PC-3 (cell line): ENCODE measurements at regions of chr2 and their contacts with region 1.

Region 1: DNA sequence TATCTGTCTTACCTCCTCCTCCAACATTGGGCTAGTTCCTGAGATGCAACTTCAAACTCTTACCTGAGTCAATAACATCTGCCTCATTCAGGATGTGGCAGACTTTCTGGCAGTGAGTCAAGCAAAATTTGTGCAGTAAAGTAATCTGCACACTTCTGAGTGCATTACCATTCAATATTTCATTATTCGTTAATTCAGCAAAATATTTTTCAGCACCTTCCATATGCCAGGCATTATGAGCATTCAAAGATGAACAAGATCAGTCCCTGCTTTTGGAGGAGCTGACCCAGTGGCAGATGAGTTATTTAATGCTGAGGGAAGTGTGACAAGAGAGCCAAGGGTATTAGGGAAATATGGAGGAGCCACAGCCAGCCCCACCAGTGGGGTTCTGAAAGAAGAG is 339.7 kb downstream of the LNPK start:
- DNase-seq: no peak
- ATAC-seq: no peak
- H3K4me3 ChIP-seq: no peak overlapping the region
- H3K27ac ChIP-seq: no peak overlapping the region
- H3K4me1 ChIP-seq: no peaks in the 10 kb centered on the region
- H3K27me3 ChIP-seq: peaks cover 58% of the 10 kb centered on the region
- CTCF ChIP-seq: no peak

Region 2: GRCh38 chr2:177106212-177106611 is 1443.9 kb after region 1 on chr2:
- CTCF ChIA-PET with region 1: interaction called, 13 read pairs
- POLR2A ChIA-PET with region 1: no interaction called
- intact Hi-C with region 1: no loop called
- DNase-seq: peak; percentile 31
- ATAC-seq: peak; percentile 73
- H3K4me3 ChIP-seq: no peak overlapping the region
- H3K27ac ChIP-seq: no peak overlapping the region
- H3K4me1 ChIP-seq: no peaks in the 10 kb centered on the region
- H3K27me3 ChIP-seq: peaks cover 51% of the 10 kb centered on the region
- CTCF ChIP-seq: peak; percentile 43; the same call in 1 of the 2 replicates